ENCODE measurements at regions of chr16 and their contacts with region 1.

Region 1: DNA sequence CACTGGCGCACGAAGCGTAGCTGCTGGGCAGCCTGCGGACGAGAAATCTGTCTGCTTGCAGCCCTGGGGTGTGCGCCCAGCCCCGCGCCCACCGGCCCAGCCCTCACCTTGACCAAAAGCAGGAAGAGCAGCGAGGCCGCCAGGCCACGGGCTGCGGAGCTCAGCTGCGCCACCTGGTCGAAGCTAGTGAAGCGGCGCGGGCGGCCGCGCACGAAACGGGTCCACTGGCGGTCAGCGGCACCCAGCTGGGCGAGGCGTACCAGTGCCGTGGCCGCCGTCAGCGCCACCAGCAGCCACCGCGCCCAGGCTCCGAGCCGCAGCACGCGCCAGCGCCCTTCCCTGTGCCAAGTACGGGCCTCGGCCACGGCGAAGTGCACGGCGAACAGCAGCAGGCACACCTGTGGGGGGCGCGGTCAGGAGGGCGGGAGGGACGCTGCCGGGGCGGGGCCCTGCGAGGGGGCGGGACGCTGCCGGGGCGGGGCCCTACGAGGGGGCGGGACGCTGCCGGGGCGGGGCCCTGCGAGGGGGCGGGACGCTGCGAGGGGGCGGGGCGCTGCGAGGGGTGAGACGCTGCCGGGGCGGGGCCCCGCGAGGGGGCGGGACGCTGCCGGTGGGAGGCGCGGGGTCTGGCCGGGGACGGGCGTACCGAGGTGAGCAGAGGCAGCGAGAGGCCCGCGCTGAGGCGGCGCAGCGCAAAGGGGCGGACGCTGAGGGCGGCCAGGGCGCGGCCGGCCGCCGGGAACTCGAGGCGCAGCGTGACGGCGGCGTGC is 43.2 kb downstream of the TSC2 start:
- DNase-seq: peak; percentile 62 to 98
- H3K4me3 ChIP-seq: peak overlapping the region; percentile 45; the same call in 1 of the 2 replicates
- H3K27ac ChIP-seq: no peak overlapping the region
- H3K4me1 ChIP-seq: no peaks in the 10 kb centered on the region; the same call in 1 of the 2 replicates
- H3K27me3 ChIP-seq: no peaks in the 10 kb centered on the region
- CTCF ChIP-seq: peak; percentile 55; the same call in 1 of the 2 replicates

Region 2: DNA sequence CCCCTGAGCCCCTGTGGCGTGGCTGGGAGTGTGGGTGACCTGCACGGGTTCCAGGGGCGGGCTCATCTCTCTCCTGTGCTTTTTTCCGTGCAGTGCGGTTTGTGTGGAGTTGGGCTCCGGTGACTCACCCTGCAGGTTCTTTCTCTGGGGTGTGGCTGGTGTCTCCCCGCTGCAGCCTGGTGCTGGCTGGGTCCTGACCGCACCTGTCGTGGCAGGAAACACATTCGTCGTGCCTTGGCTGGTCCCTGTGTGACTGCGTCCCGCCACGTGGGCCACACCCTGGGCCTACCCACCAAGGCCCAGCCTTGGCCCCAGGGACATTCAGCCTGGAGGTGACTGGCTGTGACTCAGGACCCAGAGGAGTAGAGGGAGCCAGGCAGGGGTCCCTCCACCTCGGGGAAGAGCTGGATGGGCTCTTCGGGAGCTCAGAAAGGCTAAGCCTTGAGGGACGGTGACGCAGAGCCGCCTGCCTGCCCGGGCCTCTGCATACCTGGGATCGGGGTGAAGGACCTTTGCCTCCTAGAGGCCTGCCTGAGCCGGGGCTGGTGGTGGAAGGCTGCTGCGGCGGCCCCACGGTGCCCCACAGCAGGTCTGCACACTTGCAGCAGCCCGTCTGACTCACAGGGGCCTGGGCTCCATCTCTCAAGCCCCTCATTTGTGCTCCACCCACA is 72.4 kb after region 1 on chr16:
- CTCF ChIA-PET with region 1: interaction called, 4 read pairs
- POLR2A ChIA-PET with region 1: interaction called, 11 read pairs
- intact Hi-C with region 1: no loop called
- DNase-seq: peak; percentile 90 to 96
- H3K4me3 ChIP-seq: peak overlapping the region; percentile 33; the same call in 1 of the 2 replicates
- H3K27ac ChIP-seq: peak overlapping the region; percentile 74
- H3K4me1 ChIP-seq: peaks cover 41% of the 10 kb centered on the region
- H3K27me3 ChIP-seq: no peaks in the 10 kb centered on the region
- CTCF ChIP-seq: no peak

Region 3: GRCh38 chr16:2223375-2224182 is 132.6 kb after region 1 on chr16 and contains the start of gene E4F1:
- CTCF ChIA-PET with region 1: interaction called, 6 read pairs
- POLR2A ChIA-PET with region 1: no interaction called
- intact Hi-C with region 1: loop called (anchors 5 kb)
- DNase-seq: peak; percentile 96 to 100
- H3K4me3 ChIP-seq: peak within 1 kb of the TSS; percentile 83
- H3K27ac ChIP-seq: peak within 1 kb of the TSS; percentile 24
- H3K4me1 ChIP-seq: peaks cover 20% of the 10 kb centered on the region
- H3K27me3 ChIP-seq: no peaks in the 10 kb centered on the region
- CTCF ChIP-seq: no peak
- total RNA-seq, gene E4F1: 38.8 and 41.1 TPM in 2 replicates

Region 4: DNA sequence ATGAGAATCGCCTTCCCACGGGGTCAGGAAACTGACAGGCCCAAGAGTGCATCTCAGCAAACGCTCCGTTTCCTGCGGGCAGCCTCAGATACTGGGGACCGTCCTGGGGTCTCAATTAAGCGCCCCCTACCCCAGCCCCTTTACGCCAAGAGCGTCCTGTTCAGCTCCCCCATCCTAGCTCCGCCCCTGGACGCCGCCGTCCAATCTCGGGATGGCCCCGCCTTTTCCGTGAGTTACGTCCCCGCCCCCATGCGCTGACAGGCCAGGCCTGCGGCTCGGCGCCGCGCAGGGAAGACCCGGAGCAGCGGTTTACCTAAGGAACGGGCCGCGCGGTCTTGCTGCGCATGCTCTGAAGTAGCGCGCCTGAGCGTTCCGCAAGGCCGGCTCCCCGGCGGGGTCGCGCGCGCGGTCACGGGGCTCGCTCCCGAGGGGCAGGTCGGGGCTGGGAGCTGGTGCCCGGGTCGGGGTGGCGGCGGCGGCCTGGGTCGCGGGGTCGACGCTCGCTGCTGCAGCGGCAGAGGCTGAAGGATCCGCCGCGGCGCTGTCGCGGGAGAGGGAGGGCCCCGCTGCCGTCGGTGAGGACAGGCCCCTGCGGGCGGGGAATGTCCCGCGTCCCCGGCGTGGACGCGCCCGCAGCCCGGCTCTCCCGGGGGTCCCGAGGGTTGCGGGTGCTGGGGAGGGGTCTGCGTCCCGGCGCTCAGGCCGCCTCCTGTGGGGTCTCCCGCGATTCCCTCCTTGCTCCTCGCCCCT is 820.8 kb after region 1 on chr16 and contains the start of gene FLYWCH1:
- CTCF ChIA-PET with region 1: no interaction called
- POLR2A ChIA-PET with region 1: interaction called, 11 read pairs
- intact Hi-C with region 1: no loop called
- DNase-seq: peak; percentile 89 to 99
- H3K4me3 ChIP-seq: peak within 1 kb of the TSS; percentile 83
- H3K27ac ChIP-seq: no peak within 1 kb of the TSS
- H3K4me1 ChIP-seq: peaks cover 40% of the 10 kb centered on the region
- H3K27me3 ChIP-seq: no peaks in the 10 kb centered on the region
- CTCF ChIP-seq: no peak
- total RNA-seq, gene FLYWCH1: 79.9 and 84.8 TPM in 2 replicates

Measured in PC-9 (cell line).